Calu3 (cell line): ENCODE measurements at regions of chr14 and their contacts with region 1.

Region 1: DNA sequence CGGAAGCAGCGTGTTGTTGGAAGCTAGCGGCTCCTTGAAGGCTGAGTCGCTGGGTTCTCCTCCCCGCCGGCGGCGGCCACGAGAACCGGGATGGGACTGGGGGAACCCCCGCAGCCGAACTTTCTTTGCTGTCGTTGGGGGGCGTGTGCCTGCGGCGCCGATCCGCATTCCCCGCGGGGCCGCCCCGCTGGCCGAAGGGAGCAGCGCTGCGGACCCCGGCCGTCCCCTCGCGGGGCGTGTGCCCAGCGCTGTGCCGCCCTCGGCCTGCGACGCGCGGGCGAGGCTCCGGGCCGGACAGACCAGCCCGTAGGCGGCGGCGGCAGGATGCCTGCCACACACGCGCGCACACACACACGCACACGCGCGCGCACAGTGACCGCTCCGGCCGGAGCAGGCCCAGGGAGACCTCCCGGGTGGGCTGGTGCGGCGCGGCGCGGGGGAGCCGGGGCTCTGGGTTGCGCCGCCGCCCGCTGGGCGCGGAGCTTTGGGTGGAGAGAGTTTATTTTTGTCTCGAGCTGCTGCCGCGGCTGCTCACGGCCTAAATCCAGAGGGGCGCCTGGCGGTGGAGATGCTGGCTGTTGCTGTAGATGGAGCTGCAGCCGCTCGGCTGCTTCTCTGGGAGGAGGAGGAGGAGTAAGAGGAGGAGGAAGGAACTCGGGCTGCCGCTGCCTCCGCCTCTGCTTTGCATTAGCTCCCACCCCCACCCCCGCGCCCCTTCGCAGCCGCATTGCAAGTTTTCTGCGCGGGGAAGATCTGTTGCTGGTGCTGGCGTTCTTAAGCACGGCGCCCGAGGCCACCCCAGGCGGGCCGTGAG is at the start of gene SAMD4A:
- DNase-seq: peak; percentile 72
- H3K4me3 Mint-ChIP-seq: peak within 1 kb of the TSS; percentile 92
- H3K27ac Mint-ChIP-seq: peak within 1 kb of the TSS; percentile 80
- H3K4me1 Mint-ChIP-seq: peaks cover 7% of the 10 kb centered on the region
- H3K27me3 Mint-ChIP-seq: no peaks in the 10 kb centered on the region
- CTCF ChIP-seq: no peak
- total RNA-seq, gene SAMD4A: 10.9 and 14.4 TPM in 2 replicates

Region 2: DNA sequence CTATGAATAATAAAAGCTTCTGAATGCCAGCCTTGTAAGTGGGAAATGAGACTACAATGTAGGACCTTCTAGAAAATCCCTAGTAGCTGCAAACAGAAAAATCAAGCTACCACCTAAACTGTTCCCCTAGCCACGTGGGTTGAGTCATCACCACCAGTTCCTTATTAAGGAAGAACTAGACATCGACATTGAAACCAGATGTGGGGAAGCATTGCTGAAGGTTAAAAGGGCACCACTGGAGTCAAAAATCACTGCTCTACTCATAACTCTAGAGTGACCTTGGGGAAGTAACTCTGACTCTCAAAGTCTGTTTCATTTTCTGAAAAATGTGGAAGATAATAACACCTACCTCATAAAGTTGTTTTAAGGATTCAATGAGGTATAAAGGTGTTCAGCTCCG is 116.1 kb before region 1 on chr14:
- CTCF ChIA-PET with region 1: no interaction called
- intact Hi-C with region 1: no loop called
- DNase-seq: no peak
- H3K4me3 Mint-ChIP-seq: no peak overlapping the region
- H3K27ac Mint-ChIP-seq: no peak overlapping the region
- H3K4me1 Mint-ChIP-seq: peaks cover 14% of the 10 kb centered on the region
- H3K27me3 Mint-ChIP-seq: no peaks in the 10 kb centered on the region
- CTCF ChIP-seq: no peak

Region 3: DNA sequence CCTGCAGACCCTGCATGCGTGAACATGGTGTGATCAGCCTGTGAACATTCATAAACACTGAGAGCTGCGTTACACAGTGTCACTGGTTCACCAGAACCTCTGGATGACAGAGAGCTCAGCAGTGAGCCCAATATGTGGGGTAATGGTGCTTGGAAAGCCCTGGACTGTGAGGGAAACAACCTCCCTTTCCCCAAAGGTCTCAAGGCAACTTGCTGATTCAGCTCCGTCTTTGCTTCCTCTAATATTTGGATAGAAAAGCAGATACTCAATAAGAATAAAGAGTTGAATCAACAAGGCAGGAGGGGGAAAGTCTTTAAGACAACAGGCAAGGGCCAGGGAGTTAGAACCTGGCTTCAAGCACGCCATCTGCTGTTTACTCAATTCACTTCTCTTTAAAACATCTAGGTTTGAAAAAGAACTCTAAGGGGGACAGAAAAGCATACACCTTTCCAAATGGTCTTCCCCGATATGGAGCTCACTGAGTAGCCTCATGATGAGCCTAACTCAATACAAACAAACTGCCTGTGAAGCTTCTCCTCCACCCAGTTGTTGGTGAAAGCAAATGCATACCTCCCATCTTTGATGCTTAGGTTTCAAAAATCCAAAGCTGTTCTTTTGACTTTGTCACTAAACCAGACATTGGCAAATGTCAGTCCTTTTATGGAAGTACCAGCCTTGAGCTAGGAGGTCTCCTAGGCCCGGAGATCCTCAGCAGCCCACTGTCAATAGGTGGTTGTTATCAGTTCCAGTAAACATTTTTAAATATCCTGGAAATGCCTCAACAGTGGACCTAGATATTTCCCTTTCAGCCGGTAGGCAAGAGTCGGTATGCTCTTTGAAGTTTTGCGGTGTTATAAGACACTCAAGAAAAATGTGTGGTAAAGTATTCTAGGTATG is 76.4 kb after region 1 on chr14:
- CTCF ChIA-PET with region 1: interaction called, 8 read pairs
- intact Hi-C with region 1: loop called (anchors 2 kb)
- DNase-seq: no peak
- H3K4me3 Mint-ChIP-seq: no peak overlapping the region
- H3K27ac Mint-ChIP-seq: no peak overlapping the region
- H3K4me1 Mint-ChIP-seq: peaks cover 17% of the 10 kb centered on the region
- H3K27me3 Mint-ChIP-seq: no peaks in the 10 kb centered on the region
- CTCF ChIP-seq: no peak

Region 4: GRCh38 chr14:54691525-54692283 is 125.1 kb after region 1 on chr14:
- CTCF ChIA-PET with region 1: interaction called, 31 read pairs
- intact Hi-C with region 1: loop called (anchors 1 kb)
- DNase-seq: peak; percentile 78
- H3K4me3 Mint-ChIP-seq: no peak overlapping the region
- H3K27ac Mint-ChIP-seq: no peak overlapping the region
- H3K4me1 Mint-ChIP-seq: peaks cover 2% of the 10 kb centered on the region
- H3K27me3 Mint-ChIP-seq: no peaks in the 10 kb centered on the region
- CTCF ChIP-seq: peak; percentile 68

Region 5: GRCh38 chr14:54773171-54773975 is 206.8 kb after region 1 on chr14:
- CTCF ChIA-PET with region 1: interaction called, 81 read pairs
- intact Hi-C with region 1: loop called (anchors 1 kb)
- DNase-seq: peak; percentile 84
- H3K4me3 Mint-ChIP-seq: peak overlapping the region; percentile 46
- H3K27ac Mint-ChIP-seq: peak overlapping the region; percentile 95
- H3K4me1 Mint-ChIP-seq: peaks cover 34% of the 10 kb centered on the region
- H3K27me3 Mint-ChIP-seq: no peaks in the 10 kb centered on the region
- CTCF ChIP-seq: peak; percentile 53

Region 6: GRCh38 chr14:54805521-54806322 is 239.1 kb after region 1 on chr14:
- CTCF ChIA-PET with region 1: no interaction called
- intact Hi-C with region 1: loop called (anchors 2 kb)
- DNase-seq: peak; percentile 85
- H3K4me3 Mint-ChIP-seq: peak overlapping the region; percentile 45
- H3K27ac Mint-ChIP-seq: no peak overlapping the region
- H3K4me1 Mint-ChIP-seq: peaks cover 6% of the 10 kb centered on the region
- H3K27me3 Mint-ChIP-seq: peaks cover 44% of the 10 kb centered on the region
- CTCF ChIP-seq: peak; percentile 75

Region 7: DNA sequence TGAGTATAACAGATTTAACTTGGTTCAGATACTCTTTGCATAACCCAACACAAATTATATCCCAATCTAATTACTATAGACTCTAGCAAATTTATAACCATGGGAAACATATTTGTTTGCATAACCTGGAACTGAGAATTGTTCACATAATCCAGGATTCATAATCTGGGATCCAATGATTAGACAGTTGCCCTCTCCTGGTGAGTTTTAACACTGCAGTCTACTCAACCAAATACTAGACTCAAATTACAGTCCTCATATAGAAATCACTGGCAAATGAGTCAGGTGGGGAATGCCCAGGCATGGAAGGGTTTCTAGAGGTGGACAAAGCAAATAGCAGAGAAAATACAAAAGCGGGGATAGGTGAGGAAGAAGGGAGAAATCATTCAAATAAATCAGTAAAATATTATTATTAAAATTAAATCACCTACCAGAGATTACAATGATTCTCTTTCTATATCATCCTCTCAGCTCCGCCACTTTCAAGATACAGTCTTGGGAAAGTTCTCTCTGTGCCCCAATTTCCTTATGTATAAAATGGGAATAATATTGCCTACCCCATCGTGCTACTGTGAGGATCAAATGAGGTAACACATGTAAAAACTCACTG is 326.6 kb after region 1 on chr14:
- CTCF ChIA-PET with region 1: interaction called, 3 read pairs
- intact Hi-C with region 1: loop called (anchors 5 kb)
- DNase-seq: peak; percentile 49
- H3K4me3 Mint-ChIP-seq: no peak overlapping the region
- H3K27ac Mint-ChIP-seq: no peak overlapping the region
- H3K4me1 Mint-ChIP-seq: no peaks in the 10 kb centered on the region
- H3K27me3 Mint-ChIP-seq: no peaks in the 10 kb centered on the region
- CTCF ChIP-seq: peak; percentile 51